Activated T-helper 1 cell treated with anti-CD3 and anti-CD28 coated beads, Interleukin-12 subunit alpha, Interleukin-12 subunit beta, Interleukin-2, Interleukin-4 antibody, amounts not matched to agents 30 ng/mL and 10 ng/mL and 1 ng/mL, durations not matched to agents 14 hours and 24 hours and 36 hours (primary cell): ENCODE measurements at regions of chr11 and their contacts with region 1.

Region 1: DNA sequence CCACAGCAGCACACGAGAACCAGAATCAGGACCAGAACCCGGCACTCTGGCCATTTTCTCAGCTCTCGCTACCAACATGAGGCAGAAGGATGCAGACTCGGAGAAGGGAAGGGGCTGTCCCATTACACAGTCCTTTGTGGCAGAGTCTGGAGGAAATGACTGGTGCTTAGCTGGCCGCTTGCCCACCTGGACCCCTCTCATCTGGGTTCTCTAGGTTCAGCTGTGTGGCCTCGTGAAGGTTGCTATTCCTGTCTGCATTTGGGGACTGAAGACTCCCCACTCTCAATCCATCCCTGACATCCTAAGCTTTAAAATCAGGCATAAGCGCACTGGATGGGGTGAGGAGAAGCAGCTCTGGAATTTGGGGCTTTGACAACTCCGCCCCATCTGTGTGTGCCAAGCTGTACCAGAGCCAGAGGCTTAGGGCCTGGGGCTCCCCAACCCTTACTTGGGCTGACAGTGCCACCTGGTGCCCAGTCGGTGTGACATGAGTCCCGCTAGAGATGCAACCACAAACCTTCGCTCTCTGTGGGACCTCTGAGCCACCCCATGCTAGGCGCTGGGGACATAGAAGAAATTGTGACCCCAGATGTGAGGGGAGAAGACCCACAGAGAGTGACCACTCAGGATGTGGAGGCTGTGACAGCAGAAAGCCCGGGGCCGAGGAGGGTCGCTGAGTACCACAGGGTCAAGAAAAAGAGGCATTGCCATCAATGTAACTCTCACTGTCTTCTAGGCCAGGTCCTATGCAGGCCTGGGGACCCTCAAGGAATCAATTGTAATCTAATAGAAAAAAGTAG is 35.9 kb upstream of the FCHSD2 start:
- DNase-seq: peak; percentile 68
- H3K4me3 Mint-ChIP-seq: no peak overlapping the region
- H3K27ac Mint-ChIP-seq: no peak overlapping the region
- H3K4me1 Mint-ChIP-seq: peaks cover 30% of the 10 kb centered on the region
- H3K27me3 Mint-ChIP-seq: peaks cover 20% of the 10 kb centered on the region

Region 2: GRCh38 chr11:72585762-72586311 is 592.1 kb before region 1 on chr11:
- intact Hi-C with region 1: loop called (anchors 5 kb)
- DNase-seq: peak; percentile 63
- H3K4me3 Mint-ChIP-seq: peak overlapping the region; percentile 48
- H3K27ac Mint-ChIP-seq: no peak overlapping the region
- H3K4me1 Mint-ChIP-seq: peaks cover 29% of the 10 kb centered on the region
- H3K27me3 Mint-ChIP-seq: peaks cover 40% of the 10 kb centered on the region

Region 3: DNA sequence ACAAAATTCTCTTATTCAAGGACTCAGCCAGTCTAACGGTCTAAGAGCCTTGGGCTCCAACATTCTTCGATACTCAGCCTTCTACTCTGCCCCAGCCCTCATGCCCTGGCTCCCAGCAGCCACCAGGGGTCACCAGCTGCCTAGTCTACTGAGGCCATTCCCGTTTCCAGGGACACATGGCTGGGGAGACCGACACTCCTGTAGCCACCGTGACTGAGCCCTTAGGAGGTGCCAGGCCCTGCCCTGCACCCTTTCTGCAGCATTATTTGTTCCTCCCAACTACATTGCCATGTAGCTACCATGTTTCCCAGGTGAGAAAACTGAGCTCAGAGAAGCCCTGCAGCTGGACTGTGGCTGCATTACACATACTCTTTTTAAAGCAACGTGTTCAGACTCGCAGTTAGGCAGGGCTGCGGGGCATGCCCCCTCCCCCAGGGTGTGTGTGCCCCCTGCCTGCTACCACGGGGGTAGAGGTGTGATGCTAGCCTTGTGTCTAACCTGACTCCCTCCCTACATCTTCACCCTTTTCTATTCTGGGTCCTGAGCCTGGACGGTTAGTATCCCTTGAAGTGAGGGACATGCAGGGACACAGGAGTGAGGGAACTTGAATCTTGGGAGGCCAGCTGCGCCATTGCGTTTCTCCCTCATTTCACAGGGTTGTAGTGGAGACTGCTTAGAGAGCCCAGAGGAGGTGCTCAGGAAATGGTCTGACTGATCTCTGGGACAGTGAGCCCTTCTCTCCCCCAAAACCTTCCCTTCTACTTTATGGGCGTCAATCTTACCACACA is 346.3 kb before region 1 on chr11:
- intact Hi-C with region 1: loop called (anchors 1 kb)
- DNase-seq: no peak
- H3K4me3 Mint-ChIP-seq: no peak overlapping the region
- H3K27ac Mint-ChIP-seq: peak overlapping the region; percentile 65
- H3K4me1 Mint-ChIP-seq: peaks cover 27% of the 10 kb centered on the region
- H3K27me3 Mint-ChIP-seq: no peaks in the 10 kb centered on the region

Region 4: DNA sequence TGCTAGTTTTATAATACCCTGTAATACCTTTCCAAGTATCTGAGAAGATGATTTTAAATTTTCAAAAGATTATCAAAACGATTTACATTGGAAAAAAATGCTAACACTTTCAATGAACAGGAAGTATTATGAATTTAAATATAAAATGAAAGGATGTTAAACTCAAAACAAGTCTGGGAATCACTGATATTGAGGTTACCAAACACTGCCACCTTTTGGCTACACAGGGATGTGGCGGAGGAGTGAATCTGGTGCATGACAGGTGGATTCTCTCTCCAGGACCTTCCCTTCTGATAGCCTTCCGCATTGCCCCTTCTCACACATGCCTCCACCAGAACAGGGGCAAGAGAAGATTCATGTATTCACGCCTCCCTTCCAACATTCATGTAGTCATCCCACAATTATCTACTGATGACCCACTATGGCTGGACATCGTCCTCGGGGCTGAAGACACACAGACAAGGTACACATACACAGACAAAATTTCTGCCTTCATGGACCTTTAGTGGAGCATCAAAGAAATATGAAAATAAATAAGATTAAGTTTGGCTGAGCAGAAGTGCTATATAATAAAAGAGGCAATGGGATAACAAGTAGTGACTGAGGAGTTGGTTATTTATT is 329.0 kb before region 1 on chr11:
- intact Hi-C with region 1: loop called (anchors 1 kb)
- DNase-seq: peak; percentile 26
- H3K4me3 Mint-ChIP-seq: no peak overlapping the region
- H3K27ac Mint-ChIP-seq: no peak overlapping the region
- H3K4me1 Mint-ChIP-seq: peaks cover 13% of the 10 kb centered on the region
- H3K27me3 Mint-ChIP-seq: no peaks in the 10 kb centered on the region

Region 5: DNA sequence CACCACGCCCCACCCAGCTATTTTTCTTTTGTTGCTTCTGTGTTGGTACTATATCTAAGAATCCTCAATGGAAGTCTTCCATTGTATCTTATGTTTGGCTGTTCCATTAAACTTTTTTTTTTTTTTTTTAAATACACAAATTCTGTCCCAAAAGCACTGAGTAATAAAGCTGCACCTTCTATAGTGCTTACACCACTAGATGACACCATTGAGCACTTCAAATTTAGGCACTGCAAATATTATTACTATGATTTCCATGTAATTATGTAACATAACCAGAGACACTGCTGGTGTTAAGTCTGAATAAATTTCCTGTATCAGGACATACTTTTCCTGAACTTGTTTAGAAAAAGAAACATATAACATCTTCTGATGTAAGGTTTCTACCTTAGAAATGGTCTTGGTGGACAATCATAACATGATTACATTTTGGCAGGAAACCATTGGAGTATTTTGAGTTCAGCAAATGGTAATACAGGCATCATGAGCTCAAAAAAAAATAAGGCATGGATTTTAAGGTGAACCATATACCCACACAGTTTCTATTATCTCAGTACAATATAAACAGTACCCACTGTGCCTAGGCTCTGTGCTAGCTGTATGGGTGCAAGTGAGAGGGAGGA is 253.3 kb before region 1 on chr11:
- intact Hi-C with region 1: loop called (anchors 1 kb)
- DNase-seq: no peak
- H3K4me3 Mint-ChIP-seq: no peak overlapping the region
- H3K27ac Mint-ChIP-seq: no peak overlapping the region
- H3K4me1 Mint-ChIP-seq: peaks cover 7% of the 10 kb centered on the region
- H3K27me3 Mint-ChIP-seq: no peaks in the 10 kb centered on the region

Region 6: GRCh38 chr11:73218106-73218829 is 40.3 kb after region 1 on chr11 and contains the start of gene P2RY2:
- intact Hi-C with region 1: no loop called
- DNase-seq: peak; percentile 28
- H3K4me3 Mint-ChIP-seq: peak within 1 kb of the TSS; percentile 67
- H3K27ac Mint-ChIP-seq: no peak within 1 kb of the TSS
- H3K4me1 Mint-ChIP-seq: no peaks in the 10 kb centered on the region
- H3K27me3 Mint-ChIP-seq: peaks cover 25% of the 10 kb centered on the region
- total RNA-seq, gene P2RY2: not detected in 2 replicates

Region 7: GRCh38 chr11:74011360-74012073 is 833.5 kb after region 1 on chr11:
- intact Hi-C with region 1: no loop called
- DNase-seq: peak; percentile 57
- H3K4me3 Mint-ChIP-seq: peak overlapping the region; percentile 55
- H3K27ac Mint-ChIP-seq: peak overlapping the region; percentile 99
- H3K4me1 Mint-ChIP-seq: peaks cover 91% of the 10 kb centered on the region
- H3K27me3 Mint-ChIP-seq: no peaks in the 10 kb centered on the region